ENCODE measurements at regions of chr2 and their contacts with region 1.

Region 1: GRCh38 chr2:127985735-127986134 is 42.1 kb downstream of the SAP130 start:
- DNase-seq: no peak
- ATAC-seq: no peak
- H3K4me3 ChIP-seq: peak overlapping the region in 1 of 3 experiments; percentile 29; a peak in 1 of 6 replicates
- H3K27ac ChIP-seq: peak overlapping the region; percentile 93
- H3K4me1 ChIP-seq: peaks cover 33% of the 10 kb centered on the region
- H3K27me3 ChIP-seq: no peaks in the 10 kb centered on the region
- CTCF ChIP-seq: peak; percentile 9; the same call in 1 of the 2 replicates
- EP300 ChIP-seq: no peak
- POLR2A ChIP-seq: no peak
- RAD21 ChIP-seq: no peak

Region 2: GRCh38 chr2:127893494-127893893 is 92.2 kb before region 1 on chr2:
- CTCF ChIA-PET with region 1: no interaction called
- POLR2A ChIA-PET with region 1: no interaction called
- in situ Hi-C with region 1: no loop called
- intact Hi-C with region 1: no loop called
- DNase-seq: peak; percentile 28
- ATAC-seq: peak; percentile 80
- H3K4me3 ChIP-seq: peak overlapping the region; percentile 52 to 66 (median 55)
- H3K27ac ChIP-seq: no peak overlapping the region
- H3K4me1 ChIP-seq: peaks cover 55% of the 10 kb centered on the region
- H3K27me3 ChIP-seq: no peaks in the 10 kb centered on the region
- CTCF ChIP-seq: no peak
- EP300 ChIP-seq: no peak
- POLR2A ChIP-seq: peak in 1 of 2 experiments; percentile 38; a peak in 2 of 4 replicates
- RAD21 ChIP-seq: no peak

Region 3: GRCh38 chr2:127943186-127943585 is 42.5 kb before region 1 on chr2:
- CTCF ChIA-PET with region 1: no interaction called
- POLR2A ChIA-PET with region 1: no interaction called
- in situ Hi-C with region 1: no loop called
- intact Hi-C with region 1: no loop called
- DNase-seq: no peak
- ATAC-seq: no peak
- H3K4me3 ChIP-seq: no peak overlapping the region
- H3K27ac ChIP-seq: no peak overlapping the region
- H3K4me1 ChIP-seq: no peaks in the 10 kb centered on the region
- H3K27me3 ChIP-seq: no peaks in the 10 kb centered on the region
- CTCF ChIP-seq: no peak
- EP300 ChIP-seq: no peak
- POLR2A ChIP-seq: no peak
- RAD21 ChIP-seq: no peak

Region 4: GRCh38 chr2:128027801-128028667 is 42.3 kb after region 1 on chr2 and contains the start of gene SAP130:
- CTCF ChIA-PET with region 1: no interaction called
- POLR2A ChIA-PET with region 1: no interaction called
- in situ Hi-C with region 1: no loop called
- intact Hi-C with region 1: loop called (anchors 1 kb)
- DNase-seq: peak; percentile 93
- ATAC-seq: peak; percentile 87
- H3K4me3 ChIP-seq: peak within 1 kb of the TSS; percentile 98 to 100 (median 100)
- H3K27ac ChIP-seq: peak within 1 kb of the TSS; percentile 91
- H3K4me1 ChIP-seq: peaks cover 26% of the 10 kb centered on the region
- H3K27me3 ChIP-seq: no peaks in the 10 kb centered on the region; a peak in 1 of 5 replicates
- CTCF ChIP-seq: no peak; the same call in 1 of the 2 replicates
- EP300 ChIP-seq: no peak
- POLR2A ChIP-seq: peak in 1 of 2 experiments; percentile 75; a peak in 3 of 4 replicates
- RAD21 ChIP-seq: 0 out of 2 replicates have a peak, but pooled peaks have one; percentile 31
- total RNA-seq, gene SAP130: 11.1 and 14.5 TPM in 2 replicates

Measured in HepG2 (cell line).